KBM-7 (cell line): ENCODE measurements at regions of chr2 and their contacts with region 1.

Region 1: DNA sequence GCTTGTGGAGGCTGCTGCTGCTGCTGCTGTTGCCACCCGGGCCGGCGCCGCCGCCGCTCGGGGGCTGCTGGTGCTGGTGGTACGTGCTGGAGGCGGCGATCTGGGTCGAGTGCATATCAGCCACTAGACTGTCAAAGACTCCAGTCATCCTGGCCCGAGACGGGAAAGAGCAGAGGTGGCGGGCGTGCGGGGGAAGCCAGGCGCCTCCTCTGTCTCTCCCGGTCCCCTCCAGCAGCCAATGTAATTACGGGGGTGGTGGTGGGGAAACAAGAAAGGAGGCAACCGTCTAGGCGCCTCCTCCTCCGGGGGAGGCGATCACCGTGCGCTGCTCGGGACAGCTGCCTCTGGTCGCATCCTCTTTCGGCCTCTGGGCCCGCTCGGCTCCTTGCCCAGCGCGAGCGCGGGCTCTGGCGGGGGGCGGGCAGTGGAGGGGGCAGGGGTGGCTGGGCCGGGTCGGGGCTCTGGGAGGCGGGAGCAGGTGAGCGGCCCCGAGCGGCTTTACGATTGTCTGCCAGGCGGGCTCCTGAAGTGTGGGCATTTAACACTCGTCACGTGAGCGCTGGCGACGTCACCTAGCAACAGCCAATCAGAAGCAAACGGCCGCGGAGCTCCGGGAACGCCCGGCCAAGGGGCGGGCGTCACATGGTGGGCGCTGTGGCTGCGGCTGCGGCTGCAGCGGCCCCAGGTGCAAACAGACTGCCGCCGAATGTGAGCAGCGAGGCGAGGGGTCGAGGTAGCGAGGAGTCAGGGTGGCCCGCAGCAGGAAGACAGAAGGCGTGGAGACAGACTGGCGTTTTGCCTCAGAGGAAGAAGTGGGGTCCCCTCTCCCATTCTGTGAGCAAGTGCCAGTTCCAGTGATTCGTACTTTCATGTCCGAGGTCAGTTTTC is at the start of gene DLX2:
- DNase-seq: peak; percentile 96

Region 2: DNA sequence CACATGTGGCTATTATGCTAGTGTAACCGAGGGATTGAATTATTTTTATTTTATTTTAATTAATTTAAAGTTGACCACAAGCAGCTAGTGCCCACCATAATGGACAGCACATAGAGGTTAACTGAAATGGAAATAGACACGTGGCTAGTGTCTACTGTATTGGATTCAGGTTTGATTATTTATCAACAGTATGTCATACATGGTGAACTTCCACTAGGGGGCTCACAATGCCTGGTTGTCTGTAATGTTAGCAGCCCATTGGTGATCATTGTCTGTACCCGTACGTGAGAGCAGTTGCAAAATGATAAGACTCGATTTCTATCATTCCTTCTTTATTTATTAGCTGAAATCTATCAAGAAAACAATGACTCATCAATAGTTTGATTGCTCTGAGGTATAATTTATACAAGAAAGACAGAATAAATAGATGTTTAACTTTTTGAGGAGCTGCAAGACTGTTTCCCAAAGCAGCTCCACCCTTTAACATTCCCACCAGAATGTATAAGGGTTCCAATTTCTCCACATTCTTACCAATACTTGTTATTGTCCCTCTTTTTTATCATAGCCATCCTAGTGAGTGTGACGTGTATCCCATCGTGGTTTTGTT is 503.8 kb before region 1 on chr2:
- in situ Hi-C with region 1: loop called (anchors 25 kb)
- DNase-seq: peak; percentile 63

Region 3: DNA sequence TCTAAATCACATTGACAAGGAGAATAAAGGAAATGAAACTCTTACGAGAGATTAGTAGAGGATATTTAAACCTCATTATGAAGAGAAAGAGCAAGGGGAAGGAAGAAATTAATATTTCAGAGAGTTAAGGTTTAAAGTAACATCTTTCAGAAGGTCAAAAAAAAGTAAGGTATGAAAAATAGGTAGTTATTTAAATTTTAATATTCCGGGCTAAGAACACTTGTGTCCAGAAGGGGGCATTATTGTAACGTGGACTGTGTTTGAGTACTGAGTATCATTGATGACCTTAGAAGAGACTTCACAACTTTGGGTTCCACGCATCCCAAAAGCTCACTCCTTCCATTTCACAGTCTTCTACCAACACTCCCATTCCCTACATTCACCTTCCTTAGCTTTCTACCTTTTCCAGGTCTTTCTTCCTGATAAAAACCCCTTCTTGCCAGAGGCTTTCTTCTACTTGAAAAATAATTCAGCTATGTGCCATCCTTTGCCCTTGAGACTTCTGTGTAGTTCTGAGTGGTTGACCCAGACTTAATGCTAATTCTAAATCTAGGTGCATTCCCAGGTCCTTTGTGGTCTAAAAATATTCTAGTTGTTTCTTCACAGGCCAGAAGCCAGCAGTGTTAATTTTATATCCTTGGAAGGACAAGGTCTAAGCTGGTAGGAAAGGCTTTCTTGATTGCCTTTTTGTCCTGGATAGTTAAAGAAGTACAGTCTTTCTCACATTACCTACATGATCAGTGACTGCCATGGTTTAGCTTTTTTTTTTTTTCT is 398.9 kb before region 1 on chr2:
- in situ Hi-C with region 1: loop called (anchors 25 kb)
- DNase-seq: peak; percentile 52

Region 4: DNA sequence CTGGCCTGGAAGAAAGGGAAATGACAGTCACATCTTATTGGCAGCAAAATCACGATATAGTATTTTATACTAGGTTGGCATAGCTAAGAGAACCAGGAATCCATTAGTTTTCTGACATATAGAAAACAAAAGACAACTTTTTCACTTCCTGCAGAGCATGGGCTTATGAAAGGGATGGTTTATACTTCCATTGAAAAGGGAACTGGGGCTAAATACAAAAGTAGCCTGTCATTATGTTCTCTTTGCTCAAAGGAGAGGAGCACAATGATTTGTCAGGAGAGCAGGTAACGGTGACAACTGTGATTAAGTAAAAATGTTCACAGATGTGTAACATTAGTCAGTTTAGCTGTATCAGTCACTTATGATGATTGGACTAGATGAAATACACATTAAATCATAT is 255.0 kb before region 1 on chr2:
- in situ Hi-C with region 1: no loop called
- DNase-seq: no peak